ENCODE measurements at regions of chr22 and their contacts with region 1.

Region 1: GRCh38 chr22:18024276-18024947 is at the start of gene MICAL3:
- DNase-seq: peak; percentile 45 to 61
- H3K4me3 ChIP-seq: peak within 1 kb of the TSS; percentile 59 to 75 (median 74)
- H3K27ac ChIP-seq: peak within 1 kb of the TSS; percentile 70 to 83
- H3K4me1 ChIP-seq: no peaks in the 10 kb centered on the region
- H3K27me3 ChIP-seq: no peaks in the 10 kb centered on the region
- CTCF ChIP-seq: peak in 1 of 3 donors; percentile 60
- POLR2A ChIP-seq: no peak
- total RNA-seq, gene MICAL3: 19.5 to 42.3 (median 34.8) TPM

Region 2: DNA sequence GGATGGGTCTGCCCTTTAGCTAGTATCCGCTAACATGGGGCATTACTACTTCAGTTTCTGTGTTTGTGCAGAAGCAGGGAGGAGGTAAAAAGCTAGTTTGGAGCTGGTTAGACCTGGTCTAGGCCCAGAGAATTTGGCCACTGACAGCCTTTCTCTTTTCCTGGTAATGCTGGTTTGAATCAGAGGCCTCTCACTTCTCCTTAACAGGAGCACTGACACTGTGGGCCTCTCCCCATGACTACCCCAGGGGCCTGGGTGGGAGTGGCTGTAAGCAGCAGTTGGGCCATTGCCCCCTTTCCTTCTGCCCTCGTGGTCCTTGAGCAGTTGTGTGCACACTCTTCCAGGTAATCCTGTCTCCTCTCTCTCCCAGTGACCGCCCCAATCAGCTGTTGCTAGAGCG is 469.6 kb before region 1 on chr22:
- intact Hi-C with region 1: loop called (anchors 5 kb)
- DNase-seq: no peak
- H3K4me3 ChIP-seq: no peak overlapping the region
- H3K27ac ChIP-seq: no peak overlapping the region
- H3K4me1 ChIP-seq: no peaks in the 10 kb centered on the region
- H3K27me3 ChIP-seq: no peaks in the 10 kb centered on the region
- CTCF ChIP-seq: no peak
- POLR2A ChIP-seq: no peak

Region 3: GRCh38 chr22:18077639-18078328 is 53.4 kb after region 1 on chr22 and contains the start of gene PEX26:
- intact Hi-C with region 1: loop called (anchors 2 kb)
- DNase-seq: peak; percentile 94 to 95
- H3K4me3 ChIP-seq: peak within 1 kb of the TSS; percentile 86 to 97 (median 97)
- H3K27ac ChIP-seq: peak within 1 kb of the TSS; percentile 88 to 92
- H3K4me1 ChIP-seq: peaks cover 0 to 20% of the 10 kb centered on the region in 2 donors
- H3K27me3 ChIP-seq: no peaks in the 10 kb centered on the region
- CTCF ChIP-seq: no peak
- POLR2A ChIP-seq: no peak
- total RNA-seq, gene PEX26: 18.7 to 22.2 (median 19.2) TPM

Region 4: DNA sequence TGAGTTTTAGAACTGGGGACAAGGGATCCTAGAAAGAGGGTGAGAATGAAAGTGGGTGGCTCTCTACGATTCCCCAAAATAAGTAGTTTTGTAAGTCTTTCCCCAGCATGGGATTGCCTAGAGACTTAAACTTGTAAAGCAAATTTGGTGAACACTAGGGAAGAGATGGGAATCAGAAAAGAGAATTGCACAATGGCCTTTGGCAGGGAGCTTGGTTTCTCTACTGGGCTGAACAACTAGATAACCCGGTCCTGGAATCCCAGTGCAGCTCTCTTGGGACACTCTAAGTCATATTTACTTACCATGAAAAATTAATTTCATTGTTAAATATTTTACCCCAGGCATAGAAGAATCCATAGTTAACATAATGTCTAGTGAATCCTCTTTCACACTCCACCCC is 109.0 kb after region 1 on chr22:
- intact Hi-C with region 1: no loop called
- DNase-seq: peak in 1 of 2 donors; percentile 42
- H3K4me3 ChIP-seq: no peak overlapping the region
- H3K27ac ChIP-seq: peak overlapping the region in 1 of 2 donors; percentile 73
- H3K4me1 ChIP-seq: peaks cover 0 to 5% of the 10 kb centered on the region in 2 donors
- H3K27me3 ChIP-seq: no peaks in the 10 kb centered on the region
- CTCF ChIP-seq: no peak
- POLR2A ChIP-seq: no peak

Region 5: GRCh38 chr22:19291580-19292457 is 1267.4 kb after region 1 on chr22 and contains the start of gene CLTCL1:
- intact Hi-C with region 1: no loop called
- DNase-seq: peak; percentile 41 to 82
- H3K4me3 ChIP-seq: peak within 1 kb of the TSS; percentile 78 to 90 (median 85)
- H3K27ac ChIP-seq: peak within 1 kb of the TSS; percentile 80 to 81
- H3K4me1 ChIP-seq: no peaks in the 10 kb centered on the region
- H3K27me3 ChIP-seq: no peaks in the 10 kb centered on the region
- CTCF ChIP-seq: no peak
- POLR2A ChIP-seq: peak; percentile 14
- total RNA-seq, gene CLTCL1: 2.8 to 27.0 (median 8.2) TPM

Measured in breast epithelium (tissue), 4 donors.